Activated naive CD8-positive, alpha-beta T cell treated with anti-CD3 and anti-CD28 coated beads, Interleukin-2, amount 10 ng/mL, durations not matched to agents 7 days and 5 days (primary cell): ENCODE measurements at regions of chr7 and their contacts with region 1.

Region 1: GRCh38 chr7:65006094-65006992 is at the start of gene ERV3-1:
- DNase-seq: peak; percentile 83
- ATAC-seq: peak; percentile 100
- H3K4me3 Mint-ChIP-seq: peak within 1 kb of the TSS; percentile 95
- H3K27ac Mint-ChIP-seq: peak within 1 kb of the TSS; percentile 93
- H3K4me1 Mint-ChIP-seq: peaks cover 14% of the 10 kb centered on the region
- H3K27me3 Mint-ChIP-seq: no peaks in the 10 kb centered on the region
- total RNA-seq, gene ERV3-1: 16.9 to 17.3 TPM

Region 2: GRCh38 chr7:64902806-64903721 is 103.3 kb before region 1 on chr7 and contains the start of gene ZNF273:
- POLR2A ChIA-PET with region 1: interaction called, 23 read pairs
- DNase-seq: peak; percentile 83
- ATAC-seq: peak; percentile 99
- H3K4me3 Mint-ChIP-seq: peak within 1 kb of the TSS; percentile 97
- H3K27ac Mint-ChIP-seq: peak within 1 kb of the TSS; percentile 97
- H3K4me1 Mint-ChIP-seq: peaks cover 27% of the 10 kb centered on the region
- H3K27me3 Mint-ChIP-seq: no peaks in the 10 kb centered on the region
- total RNA-seq, gene ZNF273: 10.9 to 12.6 TPM

Region 3: GRCh38 chr7:64978497-64979203 is 27.7 kb before region 1 on chr7:
- POLR2A ChIA-PET with region 1: no interaction called
- DNase-seq: no peak
- ATAC-seq: no peak
- H3K4me3 Mint-ChIP-seq: no peak overlapping the region
- H3K27ac Mint-ChIP-seq: no peak overlapping the region
- H3K4me1 Mint-ChIP-seq: no peaks in the 10 kb centered on the region
- H3K27me3 Mint-ChIP-seq: no peaks in the 10 kb centered on the region

Region 4: GRCh38 chr7:65037740-65038678 is 31.7 kb after region 1 on chr7:
- POLR2A ChIA-PET with region 1: interaction called, 28 read pairs
- DNase-seq: peak; percentile 89
- ATAC-seq: peak; percentile 90
- H3K4me3 Mint-ChIP-seq: peak overlapping the region; percentile 82
- H3K27ac Mint-ChIP-seq: peak overlapping the region; percentile 82
- H3K4me1 Mint-ChIP-seq: peaks cover 13% of the 10 kb centered on the region
- H3K27me3 Mint-ChIP-seq: no peaks in the 10 kb centered on the region

Region 5: GRCh38 chr7:65373608-65374351 is 367.4 kb after region 1 on chr7 and contains the start of gene ZNF92:
- POLR2A ChIA-PET with region 1: interaction called, 14 read pairs
- DNase-seq: peak; percentile 93
- ATAC-seq: peak; percentile 98
- H3K4me3 Mint-ChIP-seq: peak within 1 kb of the TSS; percentile 98
- H3K27ac Mint-ChIP-seq: peak within 1 kb of the TSS; percentile 95
- H3K4me1 Mint-ChIP-seq: peaks cover 16% of the 10 kb centered on the region
- H3K27me3 Mint-ChIP-seq: no peaks in the 10 kb centered on the region
- total RNA-seq, gene ZNF92: 25.5 to 26.0 TPM